ENCODE measurements at regions of chr19 and their contacts with region 1.

Region 1: GRCh38 chr19:58380722-58381466 is at the start of gene ZNF837:
- DNase-seq: peak; percentile 99
- ATAC-seq: peak; percentile 89
- H3K4me3 Mint-ChIP-seq: peak within 1 kb of the TSS; percentile 91
- H3K27ac Mint-ChIP-seq: peak within 1 kb of the TSS; percentile 94
- H3K4me1 Mint-ChIP-seq: peaks cover 19% of the 10 kb centered on the region
- H3K27me3 Mint-ChIP-seq: no peaks in the 10 kb centered on the region
- total RNA-seq, gene ZNF837: 2.0 to 2.5 TPM

Region 2: DNA sequence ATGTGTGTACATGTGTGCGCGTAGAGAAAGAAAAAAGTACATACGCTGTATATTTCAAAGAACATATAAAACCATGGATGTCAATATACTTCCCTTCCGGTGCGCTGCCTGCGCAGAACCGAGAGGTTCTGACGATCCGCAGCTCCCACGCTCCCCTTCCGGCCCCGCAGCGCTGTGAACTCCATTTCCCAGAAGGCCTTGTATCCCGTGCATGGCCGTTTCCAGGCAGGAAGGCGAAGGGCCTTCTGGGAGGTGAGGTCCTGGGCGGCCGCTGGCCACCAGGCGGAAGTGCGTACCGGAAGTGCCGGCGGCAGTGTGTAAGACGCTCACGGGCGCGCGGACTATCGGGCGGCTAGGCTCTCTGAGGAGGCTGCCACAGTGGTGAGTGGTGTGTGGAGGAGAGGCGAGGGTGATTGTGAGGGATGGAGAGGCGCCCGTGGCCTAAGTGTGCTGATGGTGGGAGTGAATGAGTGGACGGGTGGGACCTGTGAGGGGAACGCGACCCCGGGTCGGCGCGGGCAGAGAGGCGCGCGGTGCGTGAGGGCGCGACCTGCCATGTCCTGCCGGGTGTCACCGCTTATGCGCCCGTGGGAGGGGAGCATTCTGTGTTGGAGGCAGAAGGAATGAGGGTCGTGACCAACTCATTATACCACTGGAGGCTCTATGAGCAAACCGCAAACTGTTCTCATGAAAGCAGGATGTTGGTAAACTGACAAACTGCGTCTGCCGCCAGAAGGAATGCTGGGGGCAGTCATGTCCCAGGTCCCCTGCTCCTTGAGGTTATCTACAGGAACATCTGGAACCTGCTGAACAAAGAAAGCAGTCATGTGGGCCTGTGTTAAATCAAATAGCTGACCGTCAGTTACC is 75.6 kb before region 1 on chr19 and contains the start of gene ERVK3-1:
- CTCF ChIA-PET with region 1: no interaction called
- POLR2A ChIA-PET with region 1: no interaction called
- intact Hi-C with region 1: loop called (anchors 1 to 5 kb)
- DNase-seq: peak; percentile 97
- ATAC-seq: peak; percentile 98
- H3K4me3 Mint-ChIP-seq: peak within 1 kb of the TSS; percentile 99
- H3K27ac Mint-ChIP-seq: peak within 1 kb of the TSS; percentile 100
- H3K4me1 Mint-ChIP-seq: peaks cover 52% of the 10 kb centered on the region
- H3K27me3 Mint-ChIP-seq: no peaks in the 10 kb centered on the region
- total RNA-seq, gene ERVK3-1: 38.6 to 53.6 TPM

Region 3: DNA sequence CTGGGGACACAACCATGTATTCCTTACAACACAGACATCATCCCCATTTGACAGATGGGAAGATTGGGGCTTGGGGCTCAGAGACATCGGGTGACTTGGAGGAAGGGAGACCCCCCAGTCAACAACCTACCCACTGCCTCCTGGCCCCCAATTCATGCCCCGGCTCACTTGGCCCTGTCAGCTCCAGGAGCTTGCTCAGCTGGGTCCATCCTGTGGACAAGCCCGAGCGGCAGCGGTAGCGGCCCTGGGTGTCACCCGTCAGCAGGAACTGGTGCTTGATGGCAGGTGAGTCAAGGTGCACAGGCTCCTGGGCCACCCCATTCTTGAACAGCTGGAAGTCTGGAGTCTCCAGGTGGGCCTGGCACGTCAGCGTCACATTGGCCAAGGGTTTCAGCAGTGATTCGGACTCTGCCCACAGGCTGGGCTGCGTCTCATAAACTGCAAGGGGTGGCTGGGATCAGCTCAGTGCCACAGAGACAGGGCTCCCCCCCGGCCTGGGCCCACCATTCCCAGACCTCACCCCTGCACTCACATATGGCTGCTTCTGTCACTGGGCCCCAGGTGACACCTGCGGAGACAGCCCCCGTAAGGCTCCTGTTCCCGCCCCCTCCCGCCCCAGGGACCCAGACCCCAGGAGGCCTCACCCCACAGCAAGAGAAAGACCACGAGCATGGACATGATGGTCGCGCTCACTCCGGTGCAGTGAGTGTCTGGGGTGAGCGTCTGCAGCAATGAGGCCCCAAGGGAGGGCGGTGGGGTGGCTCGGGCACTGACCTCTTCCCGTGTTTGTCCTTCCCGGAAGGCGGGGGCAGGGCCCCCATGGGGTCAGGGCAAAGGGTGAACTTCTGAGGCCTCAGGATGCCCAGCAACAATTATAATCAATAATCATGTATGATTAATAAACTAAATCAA is 27.9 kb before region 1 on chr19 and contains the start of gene A1BG:
- CTCF ChIA-PET with region 1: no interaction called
- POLR2A ChIA-PET with region 1: no interaction called
- intact Hi-C with region 1: no loop called
- DNase-seq: no peak
- ATAC-seq: no peak
- H3K4me3 Mint-ChIP-seq: no peak within 1 kb of the TSS
- H3K27ac Mint-ChIP-seq: no peak within 1 kb of the TSS
- H3K4me1 Mint-ChIP-seq: peaks cover 21% of the 10 kb centered on the region
- H3K27me3 Mint-ChIP-seq: peaks cover 4% of the 10 kb centered on the region
- total RNA-seq, gene A1BG: 2.9 to 4.7 TPM

Region 4: GRCh38 chr19:58400916-58401839 is 20.3 kb after region 1 on chr19:
- CTCF ChIA-PET with region 1: no interaction called
- POLR2A ChIA-PET with region 1: no interaction called
- intact Hi-C with region 1: loop called (anchors 1 to 2 kb)
- DNase-seq: peak; percentile 100
- ATAC-seq: peak; percentile 97
- H3K4me3 Mint-ChIP-seq: peak overlapping the region; percentile 82
- H3K27ac Mint-ChIP-seq: peak overlapping the region; percentile 61
- H3K4me1 Mint-ChIP-seq: peaks cover 14% of the 10 kb centered on the region
- H3K27me3 Mint-ChIP-seq: peaks cover 2% of the 10 kb centered on the region

Region 5: GRCh38 chr19:58466760-58467589 is 86.1 kb after region 1 on chr19 and contains the start of gene ZNF324:
- CTCF ChIA-PET with region 1: no interaction called
- POLR2A ChIA-PET with region 1: no interaction called
- intact Hi-C with region 1: loop called in 1 of 2 experiments (anchors 1 kb)
- DNase-seq: peak; percentile 99
- ATAC-seq: peak; percentile 98
- H3K4me3 Mint-ChIP-seq: peak within 1 kb of the TSS; percentile 86
- H3K27ac Mint-ChIP-seq: peak within 1 kb of the TSS; percentile 47
- H3K4me1 Mint-ChIP-seq: peaks cover 22% of the 10 kb centered on the region
- H3K27me3 Mint-ChIP-seq: peaks cover 2% of the 10 kb centered on the region
- total RNA-seq, gene ZNF324: 4.7 to 7.5 TPM

Region 6: GRCh38 chr19:58519355-58520256 is 138.7 kb after region 1 on chr19 and contains the start of gene ZBTB45:
- CTCF ChIA-PET with region 1: no interaction called
- POLR2A ChIA-PET with region 1: no interaction called
- intact Hi-C with region 1: loop called in 1 of 2 experiments (anchors 1 kb)
- DNase-seq: peak; percentile 96
- ATAC-seq: peak; percentile 82
- H3K4me3 Mint-ChIP-seq: peak within 1 kb of the TSS; percentile 82
- H3K27ac Mint-ChIP-seq: peak within 1 kb of the TSS; percentile 94
- H3K4me1 Mint-ChIP-seq: peaks cover 39% of the 10 kb centered on the region
- H3K27me3 Mint-ChIP-seq: no peaks in the 10 kb centered on the region
- total RNA-seq, gene ZBTB45: 10.1 to 11.1 TPM

Measured in activated CD4-positive, alpha-beta T cell treated with anti-CD3 and anti-CD28 coated beads for 36 hours (primary cell).